Cardiac septum (tissue), 1 donor: ENCODE measurements at regions of chr1 and their contacts with region 1.

Region 1: GRCh38 chr1:14486401-14487201 is 111.9 kb upstream of the KAZN start:
- DNase-seq: no peak

Region 2: GRCh38 chr1:14522926-14523241 is 36.3 kb after region 1 on chr1:
- intact Hi-C with region 1: loop called (anchors 2 kb)
- DNase-seq: no peak

Region 3: DNA sequence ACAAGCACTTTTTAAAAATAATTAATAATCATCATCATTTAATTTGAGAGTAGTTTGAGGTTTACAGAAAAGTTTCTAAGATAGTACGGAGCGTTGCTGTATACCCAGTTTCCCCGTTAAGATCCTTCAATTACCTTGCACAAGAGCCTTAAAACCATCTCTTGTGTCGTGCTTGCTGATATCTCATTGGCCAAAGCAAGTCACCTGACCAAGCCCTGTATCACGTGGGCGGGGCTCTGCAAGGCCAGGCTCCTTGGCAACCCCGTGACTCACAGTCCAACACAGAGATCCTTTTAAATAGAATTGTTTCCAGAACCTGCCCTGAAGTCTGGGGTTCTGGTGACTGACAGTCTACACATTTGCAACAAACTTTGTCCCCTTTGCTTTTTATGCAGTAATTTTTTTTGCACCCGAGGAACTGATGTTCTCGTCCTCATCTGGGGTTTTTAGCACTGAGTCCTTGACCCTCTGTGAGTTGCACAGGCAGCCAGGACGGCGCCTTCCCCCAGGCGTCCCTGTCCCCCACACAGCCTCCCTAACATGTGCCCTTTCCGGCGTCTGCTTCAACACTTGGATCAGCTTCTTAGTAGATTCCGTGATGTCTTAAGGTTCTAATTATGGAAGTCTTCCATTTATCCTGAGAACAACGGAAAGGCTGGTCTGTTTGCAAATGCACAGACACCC is 483.7 kb after region 1 on chr1:
- intact Hi-C with region 1: no loop called
- DNase-seq: no peak

Region 4: DNA sequence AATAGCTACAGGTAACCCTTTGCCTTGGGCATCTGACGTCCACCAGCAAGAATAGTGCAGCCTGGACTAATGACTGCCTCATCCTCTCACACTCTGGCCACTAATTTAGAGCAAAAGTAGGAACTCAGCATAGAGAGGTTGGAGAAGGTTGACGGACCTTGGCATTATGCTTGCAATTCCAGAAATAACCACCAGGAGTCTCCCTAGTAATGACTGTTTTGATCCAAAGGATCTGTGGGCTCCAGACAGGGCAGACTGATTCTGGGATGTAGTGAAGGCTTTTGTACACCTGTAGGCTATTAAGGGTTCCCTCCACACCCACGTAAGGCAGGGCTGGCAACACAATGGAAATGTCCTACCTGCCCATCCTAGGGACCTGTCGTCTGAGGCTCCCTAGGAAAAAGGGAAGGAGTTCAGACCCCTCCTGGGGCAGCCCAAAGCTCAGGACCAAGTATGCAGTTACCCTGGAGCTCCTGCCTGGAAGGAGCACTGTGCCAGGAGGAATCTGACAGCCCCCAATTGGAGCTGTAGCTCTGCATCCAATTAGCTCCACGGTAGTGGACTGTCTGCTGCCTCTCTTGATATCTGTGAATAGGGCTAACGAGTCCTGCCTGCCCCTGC is 576.0 kb after region 1 on chr1:
- intact Hi-C with region 1: no loop called
- DNase-seq: no peak